ENCODE measurements at regions of chr6 and their contacts with region 1.

Region 1: GRCh38 chr6:33014841-33015634 is 5.6 kb upstream of the HLA-DOA start:
- DNase-seq: peak; percentile 52
- H3K4me3 ChIP-seq: no peak overlapping the region
- H3K27ac ChIP-seq: no peak overlapping the region
- H3K4me1 ChIP-seq: no peaks in the 10 kb centered on the region
- H3K27me3 ChIP-seq: peaks cover 11% of the 10 kb centered on the region
- CTCF ChIP-seq: peak; percentile 67 to 73

Region 2: GRCh38 chr6:32558426-32559057 is 456.5 kb before region 1 on chr6:
- CTCF ChIA-PET with region 1: no interaction called
- dilution Hi-C with region 1: no loop called
- in situ Hi-C with region 1: no loop called
- intact Hi-C with region 1: no loop called
- DNase-seq: no peak
- H3K4me3 ChIP-seq: no peak overlapping the region
- H3K27ac ChIP-seq: no peak overlapping the region
- H3K4me1 ChIP-seq: no peaks in the 10 kb centered on the region
- H3K27me3 ChIP-seq: no peaks in the 10 kb centered on the region
- CTCF ChIP-seq: no peak

Region 3: DNA sequence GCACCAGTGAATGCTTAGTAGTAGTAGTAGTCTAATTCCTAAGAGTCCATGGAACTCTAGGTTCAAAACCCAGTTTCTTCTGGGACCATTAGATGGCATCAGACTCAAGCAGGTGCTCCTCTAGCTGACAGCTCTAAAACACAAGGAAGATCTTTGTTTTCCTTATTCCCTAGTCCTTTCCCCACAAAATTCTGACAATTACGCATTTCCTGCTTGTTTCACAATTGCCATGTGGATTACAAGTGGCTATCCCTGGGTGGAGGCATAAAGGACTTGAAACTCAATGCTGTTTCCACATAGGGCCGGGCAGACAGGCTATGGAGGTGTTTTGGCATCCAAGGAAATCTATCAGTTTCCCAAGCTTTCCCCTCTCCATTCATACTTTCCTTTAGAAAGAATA is 189.1 kb before region 1 on chr6:
- CTCF ChIA-PET with region 1: no interaction called
- dilution Hi-C with region 1: no loop called
- in situ Hi-C with region 1: no loop called
- intact Hi-C with region 1: no loop called
- DNase-seq: peak; percentile 84
- H3K4me3 ChIP-seq: no peak overlapping the region
- H3K27ac ChIP-seq: peak overlapping the region; percentile 47
- H3K4me1 ChIP-seq: peaks cover 9% of the 10 kb centered on the region
- H3K27me3 ChIP-seq: no peaks in the 10 kb centered on the region
- CTCF ChIP-seq: peak; percentile 41 to 64

Region 4: DNA sequence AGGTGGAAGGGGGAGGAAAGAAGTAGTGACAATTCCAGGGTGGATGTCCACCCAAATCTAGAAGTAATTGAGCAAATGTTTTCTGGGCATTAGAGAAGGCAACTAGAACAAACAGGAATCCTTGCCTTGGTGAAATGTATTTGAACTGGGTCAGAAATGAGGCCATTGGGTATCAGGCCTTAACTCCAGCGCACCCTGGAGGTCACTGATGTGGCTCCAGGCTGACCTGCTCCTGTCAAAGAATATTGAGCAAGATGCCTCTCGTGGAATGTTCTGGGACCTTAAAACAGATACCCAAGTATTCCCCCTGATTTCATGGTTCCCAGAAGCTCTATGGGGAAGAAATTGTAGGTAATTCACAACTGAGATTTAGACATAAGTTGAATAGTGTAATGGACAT is 67.7 kb after region 1 on chr6:
- CTCF ChIA-PET with region 1: no interaction called
- dilution Hi-C with region 1: no loop called
- in situ Hi-C with region 1: loop called in 1 of 2 experiments (anchors 10 kb)
- intact Hi-C with region 1: loop called (anchors 1 kb)
- DNase-seq: no peak
- H3K4me3 ChIP-seq: no peak overlapping the region
- H3K27ac ChIP-seq: no peak overlapping the region
- H3K4me1 ChIP-seq: peaks cover 9% of the 10 kb centered on the region
- H3K27me3 ChIP-seq: no peaks in the 10 kb centered on the region
- CTCF ChIP-seq: peak; percentile 3 to 24

Region 5: GRCh38 chr6:33147807-33148666 is 133.0 kb after region 1 on chr6:
- CTCF ChIA-PET with region 1: no interaction called
- dilution Hi-C with region 1: no loop called
- in situ Hi-C with region 1: loop called in 1 of 2 experiments (anchors 10 kb)
- intact Hi-C with region 1: loop called (anchors 1 kb)
- DNase-seq: peak; percentile 17
- H3K4me3 ChIP-seq: no peak overlapping the region
- H3K27ac ChIP-seq: no peak overlapping the region
- H3K4me1 ChIP-seq: no peaks in the 10 kb centered on the region
- H3K27me3 ChIP-seq: no peaks in the 10 kb centered on the region
- CTCF ChIP-seq: peak; percentile 70 to 79

Region 6: GRCh38 chr6:33183071-33183683 is 168.1 kb after region 1 on chr6:
- CTCF ChIA-PET with region 1: no interaction called
- dilution Hi-C with region 1: no loop called
- in situ Hi-C with region 1: no loop called
- intact Hi-C with region 1: no loop called
- DNase-seq: no peak
- H3K4me3 ChIP-seq: no peak overlapping the region
- H3K27ac ChIP-seq: no peak overlapping the region
- H3K4me1 ChIP-seq: no peaks in the 10 kb centered on the region
- H3K27me3 ChIP-seq: no peaks in the 10 kb centered on the region
- CTCF ChIP-seq: no peak